CD8-positive, alpha-beta T cell (primary cell): ENCODE measurements at regions of chr4 and their contacts with region 1.

Region 1: GRCh38 chr4:136893573-136893972 is 638.7 kb downstream of the PCDH18 start:
- DNase-seq: no peak
- ATAC-seq: no peak
- H3K4me3 ChIP-seq: no peak overlapping the region
- H3K4me3 Mint-ChIP-seq: no peak overlapping the region
- H3K27ac ChIP-seq: no peak overlapping the region
- H3K27ac Mint-ChIP-seq: no peak overlapping the region
- H3K4me1 ChIP-seq: no peaks in the 10 kb centered on the region
- H3K4me1 Mint-ChIP-seq: no peaks in the 10 kb centered on the region
- H3K27me3 ChIP-seq: no peaks in the 10 kb centered on the region
- H3K27me3 Mint-ChIP-seq: no peaks in the 10 kb centered on the region
- CTCF ChIP-seq: no peak

Region 2: GRCh38 chr4:136424052-136424451 is 469.5 kb before region 1 on chr4:
- CTCF ChIA-PET with region 1: no interaction called
- POLR2A ChIA-PET with region 1: no interaction called
- intact Hi-C with region 1: loop called in 1 of 2 experiments (anchors 5 kb)
- DNase-seq: no peak
- ATAC-seq: no peak
- H3K4me3 ChIP-seq: no peak overlapping the region
- H3K4me3 Mint-ChIP-seq: no peak overlapping the region
- H3K27ac ChIP-seq: no peak overlapping the region
- H3K27ac Mint-ChIP-seq: no peak overlapping the region
- H3K4me1 ChIP-seq: no peaks in the 10 kb centered on the region
- H3K4me1 Mint-ChIP-seq: no peaks in the 10 kb centered on the region
- H3K27me3 ChIP-seq: no peaks in the 10 kb centered on the region
- H3K27me3 Mint-ChIP-seq: no peaks in the 10 kb centered on the region
- CTCF ChIP-seq: no peak

Region 3: DNA sequence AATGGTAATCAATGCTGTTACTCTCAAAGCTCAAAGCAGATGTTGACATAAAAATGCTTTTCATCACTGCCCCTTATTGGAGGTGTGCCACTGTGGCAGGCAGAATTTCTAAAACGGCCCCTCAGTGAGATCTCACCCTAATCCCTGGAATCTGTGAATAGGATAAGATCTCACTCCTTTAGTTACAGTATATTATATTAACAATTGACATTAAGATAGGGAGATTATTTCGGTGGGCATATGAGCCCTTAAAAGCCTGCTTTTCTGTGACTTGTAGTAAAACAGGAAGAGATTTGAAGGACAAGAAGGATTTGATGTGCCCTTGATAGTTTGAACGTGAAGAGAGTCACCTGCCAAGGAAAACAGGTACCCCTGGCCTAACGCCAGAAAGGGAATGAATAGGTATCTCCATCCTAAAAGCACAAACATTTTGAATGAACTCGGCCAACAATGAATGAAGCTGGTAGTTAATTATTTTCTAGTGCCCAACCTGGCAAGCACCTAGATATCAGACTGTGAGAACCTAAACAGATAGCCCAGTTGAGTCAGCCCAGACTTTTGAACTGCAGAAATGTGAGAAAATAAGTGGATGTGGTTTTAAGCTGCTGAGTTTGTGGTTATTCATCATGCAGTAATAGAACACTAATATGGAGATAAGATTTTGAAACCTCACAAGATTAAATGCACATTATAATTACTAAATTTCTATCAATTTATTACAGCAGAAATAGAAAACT is 242.9 kb before region 1 on chr4:
- CTCF ChIA-PET with region 1: no interaction called
- POLR2A ChIA-PET with region 1: no interaction called
- intact Hi-C with region 1: no loop called
- DNase-seq: peak in 2 of 9 experiments; percentile 42 to 63
- ATAC-seq: no peak
- H3K4me3 ChIP-seq: no peak overlapping the region
- H3K4me3 Mint-ChIP-seq: no peak overlapping the region
- H3K27ac ChIP-seq: peak overlapping the region in 1 of 2 experiments; percentile 12
- H3K27ac Mint-ChIP-seq: no peak overlapping the region
- H3K4me1 ChIP-seq: no peaks in the 10 kb centered on the region
- H3K4me1 Mint-ChIP-seq: peaks cover 4% of the 10 kb centered on the region
- H3K27me3 ChIP-seq: no peaks in the 10 kb centered on the region
- H3K27me3 Mint-ChIP-seq: no peaks in the 10 kb centered on the region
- CTCF ChIP-seq: no peak

Region 4: DNA sequence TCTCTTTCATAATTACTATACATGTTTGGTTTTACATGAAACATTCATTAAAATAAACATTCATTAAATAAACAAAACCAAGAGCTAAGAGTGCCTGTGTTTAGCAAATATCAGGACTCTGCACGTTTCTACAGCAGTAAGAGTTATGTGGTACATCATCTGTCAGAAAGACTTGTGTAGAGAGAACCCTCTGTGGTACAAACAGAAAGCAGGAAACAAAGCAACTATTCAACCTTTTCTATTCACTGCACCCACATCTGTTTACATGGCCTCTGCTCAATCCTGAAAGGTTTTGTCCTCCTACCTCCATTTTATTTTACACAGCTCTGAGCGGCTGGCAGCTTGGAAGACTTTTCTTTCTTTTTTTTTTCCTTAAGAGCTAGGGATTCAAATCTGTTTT is 729.4 kb after region 1 on chr4:
- CTCF ChIA-PET with region 1: no interaction called
- POLR2A ChIA-PET with region 1: no interaction called
- intact Hi-C with region 1: no loop called
- DNase-seq: no peak
- ATAC-seq: no peak
- H3K4me3 ChIP-seq: no peak overlapping the region
- H3K4me3 Mint-ChIP-seq: no peak overlapping the region
- H3K27ac ChIP-seq: no peak overlapping the region
- H3K27ac Mint-ChIP-seq: no peak overlapping the region
- H3K4me1 ChIP-seq: no peaks in the 10 kb centered on the region
- H3K4me1 Mint-ChIP-seq: no peaks in the 10 kb centered on the region
- H3K27me3 ChIP-seq: no peaks in the 10 kb centered on the region
- H3K27me3 Mint-ChIP-seq: no peaks in the 10 kb centered on the region
- CTCF ChIP-seq: no peak